ENCODE measurements at regions of chr12 and their contacts with region 1.

Region 1: GRCh38 chr12:117857632-117858612 is 110.9 kb downstream of the KSR2 start:
- ATAC-seq: peak in 3 of 8 experiments; percentile 53 to 78 (median 62)
- H3K4me3 ChIP-seq: no peak overlapping the region
- H3K27ac ChIP-seq: no peak overlapping the region
- H3K4me1 ChIP-seq: no peaks in the 10 kb centered on the region

Region 2: DNA sequence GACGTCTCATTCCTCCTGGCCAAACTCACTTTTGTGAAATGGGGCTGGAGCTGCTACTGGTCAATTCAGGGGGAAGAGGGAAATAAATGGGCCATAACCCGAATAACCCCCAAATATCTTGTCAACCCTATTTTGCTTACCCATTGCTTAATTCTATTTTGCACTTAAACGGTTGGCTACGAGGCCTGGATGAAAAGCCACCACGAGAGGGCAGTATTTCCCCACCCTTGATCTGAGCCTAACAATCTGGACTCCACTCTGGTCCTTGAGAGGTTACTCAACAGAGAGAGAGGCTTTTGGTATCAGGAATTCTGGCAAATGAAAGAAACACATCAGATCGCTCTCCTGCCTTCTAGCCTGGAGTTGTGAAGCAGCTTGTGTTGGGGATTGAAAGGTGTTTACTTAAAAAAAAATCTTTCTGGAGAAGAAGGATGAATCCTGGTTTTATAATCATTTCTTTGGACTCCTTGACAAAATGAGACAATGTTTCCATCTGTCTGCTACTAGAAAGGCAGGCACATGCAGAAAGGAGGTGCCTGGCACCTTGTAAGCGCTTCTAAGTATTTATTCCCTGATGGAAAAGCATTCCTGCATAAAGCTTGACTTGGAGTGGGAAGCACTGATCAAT is 645.2 kb before region 1 on chr12:
- in situ Hi-C with region 1: loop called in 2 of 9 experiments (anchors 10 to 25 kb)
- ATAC-seq: peak; percentile 76 to 93 (median 88)
- H3K4me3 ChIP-seq: no peak overlapping the region
- H3K27ac ChIP-seq: no peak overlapping the region
- H3K4me1 ChIP-seq: no peaks in the 10 kb centered on the region